GM12878 (cell line): ENCODE measurements at regions of chr5 and their contacts with region 1.

Region 1: GRCh38 chr5:142888469-142889085 is 118.4 kb downstream of the ARHGAP26 start:
- DNase-seq: no peak
- ATAC-seq: peak; percentile 70
- H3K4me3 ChIP-seq: no peak overlapping the region
- H3K27ac ChIP-seq: no peak overlapping the region
- H3K4me1 ChIP-seq: no peaks in the 10 kb centered on the region
- H3K27me3 ChIP-seq: no peaks in the 10 kb centered on the region
- CTCF ChIP-seq: peak; percentile 60 to 69 (median 69)
- EP300 ChIP-seq: no peak
- POLR2A ChIP-seq: no peak
- RAD21 ChIP-seq: peak; percentile 71

Region 2: DNA sequence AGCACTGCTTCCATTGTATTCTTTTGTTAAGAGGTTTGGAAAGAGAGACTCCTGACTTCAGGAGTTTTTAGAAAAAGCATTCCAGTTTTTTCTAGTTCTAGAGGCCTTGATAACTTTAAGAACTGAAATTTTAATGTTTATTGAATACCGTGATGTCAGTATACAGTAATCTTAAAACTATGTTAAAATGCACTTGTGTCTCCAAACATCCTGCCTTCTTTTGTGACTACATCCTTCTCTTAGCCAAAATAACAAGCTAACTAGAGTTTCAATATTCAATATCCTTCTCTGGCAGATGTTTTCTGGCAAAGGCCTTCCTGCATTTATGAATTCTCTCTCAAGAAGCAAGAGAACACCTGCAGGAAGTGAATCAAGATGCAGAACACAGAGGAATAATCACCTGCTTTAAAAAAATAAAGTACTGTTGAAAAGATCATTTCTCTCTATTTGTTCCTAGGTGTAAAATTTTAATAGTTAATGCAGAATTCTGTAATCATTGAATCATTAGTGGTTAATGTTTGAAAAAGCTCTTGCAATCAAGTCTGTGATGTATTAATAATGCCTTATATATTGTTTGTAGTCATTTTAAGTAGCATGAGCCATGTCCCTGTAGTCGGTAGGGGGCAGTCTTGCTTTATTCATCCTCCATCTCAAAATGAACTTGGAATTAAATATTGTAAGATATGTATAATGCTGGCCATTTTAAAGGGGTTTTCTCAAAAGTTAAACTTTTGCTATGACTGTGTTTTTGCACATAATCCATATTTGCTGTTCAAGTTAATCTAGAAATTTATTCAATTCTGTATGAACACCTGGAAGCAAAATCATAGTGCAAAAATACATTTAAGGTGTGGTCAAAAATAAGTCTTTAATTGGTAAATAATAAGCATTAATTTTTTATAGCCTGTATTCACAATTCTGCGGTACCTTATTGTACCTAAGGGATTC is 736.9 kb before region 1 on chr5:
- CTCF ChIA-PET with region 1: no interaction called
- POLR2A ChIA-PET with region 1: no interaction called
- RAD21 ChIA-PET with region 1: no interaction called
- SMC1A ChIA-PET with region 1: no interaction called
- in situ Hi-C with region 1: loop called (anchors 10 kb)
- intact Hi-C with region 1: no loop called
- DNase-seq: peak; percentile 2
- ATAC-seq: peak; percentile 72
- H3K4me3 ChIP-seq: no peak overlapping the region
- H3K27ac ChIP-seq: no peak overlapping the region
- H3K4me1 ChIP-seq: no peaks in the 10 kb centered on the region
- H3K27me3 ChIP-seq: no peaks in the 10 kb centered on the region
- CTCF ChIP-seq: peak; percentile 61 to 85 (median 75); a peak in 5 of 6 replicates
- EP300 ChIP-seq: no peak
- POLR2A ChIP-seq: no peak
- RAD21 ChIP-seq: peak; percentile 82

Region 3: GRCh38 chr5:142655339-142656267 is 233.0 kb before region 1 on chr5:
- CTCF ChIA-PET with region 1: interaction called, 43 read pairs
- POLR2A ChIA-PET with region 1: no interaction called
- RAD21 ChIA-PET with region 1: interaction called, 14 read pairs
- SMC1A ChIA-PET with region 1: interaction called, 7 read pairs
- in situ Hi-C with region 1: no loop called
- intact Hi-C with region 1: loop called (anchors 2 kb)
- DNase-seq: no peak
- ATAC-seq: peak; percentile 98
- H3K4me3 ChIP-seq: no peak overlapping the region
- H3K27ac ChIP-seq: no peak overlapping the region
- H3K4me1 ChIP-seq: no peaks in the 10 kb centered on the region
- H3K27me3 ChIP-seq: peaks cover 0 to 1% of the 10 kb centered on the region in 2 experiments; a peak in 2 of 4 replicates
- CTCF ChIP-seq: peak; percentile 86 to 96 (median 94)
- EP300 ChIP-seq: no peak
- POLR2A ChIP-seq: no peak
- RAD21 ChIP-seq: peak; percentile 78

Region 4: DNA sequence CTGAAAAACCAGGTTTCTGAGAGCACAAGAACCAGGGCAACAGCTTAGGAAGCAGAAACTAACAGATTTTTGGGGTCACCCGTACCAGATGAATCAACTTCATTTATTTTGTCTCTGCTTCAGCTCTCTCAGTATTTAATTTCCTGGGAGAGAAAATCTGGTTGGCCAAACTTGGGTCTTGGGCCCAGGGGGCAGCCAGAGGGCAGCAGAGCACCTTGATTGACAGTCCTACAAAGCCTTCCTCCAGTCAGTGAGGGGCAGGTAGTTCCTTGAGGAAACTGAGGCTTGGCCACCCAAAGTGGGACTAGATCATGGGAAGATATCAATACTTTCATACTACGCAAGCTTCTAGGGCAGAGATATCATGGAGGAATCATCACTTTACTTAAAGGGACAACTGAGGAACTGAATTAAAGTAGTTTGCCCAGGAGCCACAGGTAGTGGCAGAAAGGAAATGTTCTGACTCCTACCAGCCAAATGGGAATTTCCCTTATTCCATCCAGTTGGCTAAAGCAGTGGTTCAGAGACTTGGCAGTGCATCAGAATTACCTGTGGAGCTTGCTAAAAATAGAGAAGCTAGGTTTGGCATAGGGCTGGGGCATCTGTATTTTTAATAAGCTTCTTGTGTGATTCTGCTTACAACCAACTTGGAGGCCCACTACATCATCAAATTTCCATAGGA is 139.9 kb before region 1 on chr5:
- CTCF ChIA-PET with region 1: interaction called, 144 read pairs
- POLR2A ChIA-PET with region 1: no interaction called
- RAD21 ChIA-PET with region 1: interaction called, 24 read pairs
- SMC1A ChIA-PET with region 1: interaction called, 49 read pairs
- in situ Hi-C with region 1: no loop called
- intact Hi-C with region 1: no loop called
- DNase-seq: no peak
- ATAC-seq: peak; percentile 84
- H3K4me3 ChIP-seq: no peak overlapping the region
- H3K27ac ChIP-seq: no peak overlapping the region
- H3K4me1 ChIP-seq: no peaks in the 10 kb centered on the region
- H3K27me3 ChIP-seq: no peaks in the 10 kb centered on the region; a peak in 2 of 4 replicates
- CTCF ChIP-seq: peak; percentile 67 to 83 (median 67)
- EP300 ChIP-seq: no peak
- POLR2A ChIP-seq: no peak
- RAD21 ChIP-seq: peak; percentile 72

Region 5: DNA sequence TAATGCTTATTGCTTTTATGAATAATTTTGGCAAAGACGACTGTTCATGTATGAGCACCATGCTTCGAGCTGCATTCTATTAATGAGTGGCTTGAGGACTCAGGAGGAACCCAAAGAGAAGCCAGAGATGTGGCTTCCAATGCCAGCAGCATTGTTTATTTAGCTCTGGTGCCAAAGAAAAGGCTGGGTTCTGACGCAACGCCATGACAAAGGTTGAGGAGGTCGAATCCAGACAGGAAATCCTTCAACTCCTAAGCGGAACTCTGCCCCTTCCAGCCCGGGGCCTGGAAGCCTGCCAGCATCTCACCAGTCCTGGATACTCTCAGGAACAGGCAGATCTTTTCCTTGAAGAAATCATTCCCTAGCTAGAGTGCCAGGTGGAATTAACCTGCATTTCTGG is 14.0 kb before region 1 on chr5:
- CTCF ChIA-PET with region 1: interaction called, 38 read pairs
- POLR2A ChIA-PET with region 1: no interaction called
- RAD21 ChIA-PET with region 1: interaction called, 7 read pairs
- SMC1A ChIA-PET with region 1: interaction called, 9 read pairs
- in situ Hi-C with region 1: no loop called
- intact Hi-C with region 1: no loop called
- DNase-seq: no peak
- ATAC-seq: no peak
- H3K4me3 ChIP-seq: no peak overlapping the region
- H3K27ac ChIP-seq: no peak overlapping the region
- H3K4me1 ChIP-seq: no peaks in the 10 kb centered on the region
- H3K27me3 ChIP-seq: no peaks in the 10 kb centered on the region
- CTCF ChIP-seq: no peak
- EP300 ChIP-seq: no peak
- POLR2A ChIP-seq: no peak
- RAD21 ChIP-seq: no peak

Region 6: DNA sequence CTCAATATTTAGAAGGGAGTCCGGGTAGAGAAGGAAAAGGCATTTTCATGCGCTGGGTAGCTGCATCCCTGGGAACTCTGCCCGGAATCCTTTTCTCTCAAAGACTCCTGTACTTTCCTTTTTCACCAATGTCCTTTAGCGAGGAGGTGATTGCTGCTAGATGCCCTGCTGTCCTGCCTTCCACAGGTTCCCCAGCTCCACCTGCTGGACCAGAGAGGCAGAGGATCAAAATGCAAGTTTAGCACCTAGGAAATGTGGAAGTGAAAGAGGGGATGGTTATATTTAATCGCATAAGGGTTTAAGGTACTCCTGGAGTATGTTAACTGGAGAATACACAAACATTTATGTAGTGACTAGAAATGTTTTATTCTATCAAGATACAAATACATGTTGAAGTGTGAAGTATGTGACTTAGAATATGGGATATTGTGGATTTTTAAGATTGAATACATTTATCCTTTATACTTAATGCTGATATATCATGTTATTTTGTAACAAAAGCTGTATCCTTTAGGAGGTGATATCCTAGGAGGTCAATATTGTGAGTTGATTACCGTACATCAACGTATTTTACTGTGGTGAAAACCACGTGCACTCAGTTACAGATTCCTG is 27.3 kb after region 1 on chr5:
- CTCF ChIA-PET with region 1: interaction called, 17 read pairs
- POLR2A ChIA-PET with region 1: no interaction called
- RAD21 ChIA-PET with region 1: interaction called, 11 read pairs
- SMC1A ChIA-PET with region 1: interaction called, 3 read pairs
- in situ Hi-C with region 1: no loop called
- intact Hi-C with region 1: no loop called
- DNase-seq: peak; percentile 51
- ATAC-seq: peak; percentile 99
- H3K4me3 ChIP-seq: no peak overlapping the region
- H3K27ac ChIP-seq: no peak overlapping the region
- H3K4me1 ChIP-seq: peaks cover 11% of the 10 kb centered on the region; the same call in 1 of the 2 replicates
- H3K27me3 ChIP-seq: no peaks in the 10 kb centered on the region
- CTCF ChIP-seq: peak; percentile 66 to 75 (median 70)
- EP300 ChIP-seq: peak in 1 of 2 experiments; percentile 54; a peak in 1 of 4 replicates
- POLR2A ChIP-seq: no peak
- RAD21 ChIP-seq: peak; percentile 62